ENCODE measurements at regions of chr10 and their contacts with region 1.

Region 1: GRCh38 chr10:5527331-5528200 is 2.8 kb downstream of the CALML3 start:
- DNase-seq: no peak
- H3K4me3 ChIP-seq: no peak overlapping the region
- H3K27ac ChIP-seq: no peak overlapping the region
- H3K4me1 ChIP-seq: no peaks in the 10 kb centered on the region
- H3K27me3 ChIP-seq: no peaks in the 10 kb centered on the region
- CTCF ChIP-seq: no peak

Region 2: GRCh38 chr10:5589715-5590521 is 62.4 kb after region 1 on chr10:
- CTCF ChIA-PET with region 1: no interaction called
- POLR2A ChIA-PET with region 1: interaction called, 16 read pairs
- intact Hi-C with region 1: no loop called
- DNase-seq: peak; percentile 49 to 72
- H3K4me3 ChIP-seq: peak overlapping the region; percentile 31; the same call in 1 of the 2 replicates
- H3K27ac ChIP-seq: peak overlapping the region; percentile 99
- H3K4me1 ChIP-seq: peaks cover 96% of the 10 kb centered on the region
- H3K27me3 ChIP-seq: no peaks in the 10 kb centered on the region
- CTCF ChIP-seq: 0 out of 2 replicates have a peak, but pooled peaks have one; percentile 24

Region 3: GRCh38 chr10:5917305-5917704 is 389.7 kb after region 1 on chr10:
- CTCF ChIA-PET with region 1: no interaction called
- POLR2A ChIA-PET with region 1: no interaction called
- intact Hi-C with region 1: no loop called
- DNase-seq: no peak
- H3K4me3 ChIP-seq: no peak overlapping the region
- H3K27ac ChIP-seq: no peak overlapping the region
- H3K4me1 ChIP-seq: no peaks in the 10 kb centered on the region
- H3K27me3 ChIP-seq: no peaks in the 10 kb centered on the region
- CTCF ChIP-seq: no peak

Measured in PC-9 (cell line).